ENCODE measurements at regions of chr12 and their contacts with region 1.

Region 1: DNA sequence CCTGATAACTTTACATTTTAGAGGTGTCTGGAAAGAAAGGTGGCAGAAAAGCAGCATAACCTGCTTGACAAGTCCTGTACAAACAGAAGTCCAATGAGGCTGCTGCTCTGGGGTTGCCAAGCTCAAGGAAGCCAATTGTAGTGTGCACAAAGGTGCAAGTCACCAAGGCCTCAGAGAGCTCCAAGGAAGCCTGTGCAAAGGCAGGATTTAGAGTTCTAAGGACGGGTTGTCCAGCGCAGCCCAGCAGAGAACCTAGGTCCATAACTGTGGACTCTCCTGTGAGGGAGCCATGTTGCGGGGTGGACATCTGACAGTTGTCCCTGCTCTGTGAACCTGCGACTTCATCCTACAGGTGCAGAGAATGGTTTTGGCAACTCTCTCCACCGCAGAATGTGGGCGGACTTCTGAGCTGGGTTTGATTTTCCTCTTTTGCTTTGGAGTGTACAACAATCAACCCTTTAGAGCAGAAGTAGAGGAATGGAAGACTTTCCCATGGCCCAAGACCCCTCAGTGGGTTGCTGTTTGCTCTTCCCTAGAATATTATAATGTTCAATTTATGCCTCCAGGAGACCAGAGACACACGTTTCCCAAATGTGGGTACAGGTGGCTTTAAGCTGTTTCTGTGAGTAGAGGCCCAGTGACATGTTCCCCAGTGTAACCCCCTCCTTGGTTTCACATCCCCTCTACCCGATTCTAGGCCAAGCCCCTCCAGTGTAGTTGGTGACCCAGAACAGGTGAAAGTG is 81.0 kb downstream of the ETV6 start:
- DNase-seq: peak; percentile 85
- ATAC-seq: peak; percentile 49
- H3K4me3 ChIP-seq: peak overlapping the region; percentile 18; the same call in 1 of the 2 replicates
- H3K27ac ChIP-seq: peak overlapping the region; percentile 89
- H3K4me1 ChIP-seq: peaks cover 93% of the 10 kb centered on the region
- H3K27me3 ChIP-seq: no peaks in the 10 kb centered on the region
- CTCF ChIP-seq: no peak
- EP300 ChIP-seq: peak in 1 of 2 experiments; percentile 52; a peak in 2 of 4 replicates
- POLR2A ChIP-seq: peak; percentile 62; the same call in 1 of the 2 replicates
- RAD21 ChIP-seq: peak; percentile 34

Region 2: GRCh38 chr12:11524446-11524845 is 206.0 kb before region 1 on chr12:
- CTCF ChIA-PET with region 1: no interaction called
- POLR2A ChIA-PET with region 1: no interaction called
- RAD21 ChIA-PET with region 1: no interaction called
- SMC1A ChIA-PET with region 1: no interaction called
- in situ Hi-C with region 1: no loop called
- intact Hi-C with region 1: no loop called
- DNase-seq: no peak
- ATAC-seq: no peak
- H3K4me3 ChIP-seq: no peak overlapping the region
- H3K27ac ChIP-seq: no peak overlapping the region
- H3K4me1 ChIP-seq: no peaks in the 10 kb centered on the region
- H3K27me3 ChIP-seq: no peaks in the 10 kb centered on the region; a peak in 1 of 4 replicates
- CTCF ChIP-seq: no peak
- EP300 ChIP-seq: no peak
- POLR2A ChIP-seq: no peak
- RAD21 ChIP-seq: no peak

Region 3: GRCh38 chr12:11568762-11569478 is 161.6 kb before region 1 on chr12:
- CTCF ChIA-PET with region 1: no interaction called
- POLR2A ChIA-PET with region 1: interaction called, 5 read pairs
- RAD21 ChIA-PET with region 1: interaction called, 44 read pairs
- SMC1A ChIA-PET with region 1: interaction called, 10 read pairs
- in situ Hi-C with region 1: no loop called
- intact Hi-C with region 1: loop called (anchors 2 kb)
- DNase-seq: peak; percentile 96
- ATAC-seq: peak; percentile 77
- H3K4me3 ChIP-seq: peak overlapping the region; percentile 48
- H3K27ac ChIP-seq: peak overlapping the region; percentile 98
- H3K4me1 ChIP-seq: peaks cover 46% of the 10 kb centered on the region
- H3K27me3 ChIP-seq: no peaks in the 10 kb centered on the region
- CTCF ChIP-seq: no peak
- EP300 ChIP-seq: peak; percentile 99
- POLR2A ChIP-seq: no peak
- RAD21 ChIP-seq: no peak

Region 4: DNA sequence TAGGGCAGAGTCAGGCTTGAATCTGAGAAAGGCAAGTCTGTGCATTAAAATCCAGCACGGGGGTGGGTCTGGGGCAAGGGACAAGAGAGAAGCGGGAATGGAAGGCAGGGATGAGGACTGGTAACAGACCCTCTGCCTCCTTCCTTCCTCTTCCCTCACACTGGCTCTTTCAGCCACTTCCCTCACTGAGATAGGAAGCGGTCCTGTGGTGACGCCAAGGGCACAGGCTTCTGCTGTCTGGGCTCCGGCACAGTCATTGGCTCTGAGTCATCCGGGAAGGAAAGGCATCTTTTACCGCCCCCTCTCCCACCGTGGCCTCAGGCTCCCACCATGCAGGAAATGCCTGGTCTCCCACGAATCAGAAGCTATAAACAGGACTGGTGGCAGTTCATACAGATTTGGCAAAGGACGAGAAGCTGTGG is 10.8 kb before region 1 on chr12:
- CTCF ChIA-PET with region 1: interaction called, 15 read pairs
- POLR2A ChIA-PET with region 1: interaction called, 28 read pairs
- RAD21 ChIA-PET with region 1: interaction called, 108 read pairs
- SMC1A ChIA-PET with region 1: interaction called, 115 read pairs
- in situ Hi-C with region 1: no loop called
- intact Hi-C with region 1: no loop called
- DNase-seq: no peak
- ATAC-seq: peak; percentile 12
- H3K4me3 ChIP-seq: no peak overlapping the region
- H3K27ac ChIP-seq: peak overlapping the region; percentile 83
- H3K4me1 ChIP-seq: peaks cover 78% of the 10 kb centered on the region
- H3K27me3 ChIP-seq: no peaks in the 10 kb centered on the region
- CTCF ChIP-seq: no peak
- EP300 ChIP-seq: no peak
- POLR2A ChIP-seq: peak; percentile 53; the same call in 1 of the 2 replicates
- RAD21 ChIP-seq: no peak

Region 5: DNA sequence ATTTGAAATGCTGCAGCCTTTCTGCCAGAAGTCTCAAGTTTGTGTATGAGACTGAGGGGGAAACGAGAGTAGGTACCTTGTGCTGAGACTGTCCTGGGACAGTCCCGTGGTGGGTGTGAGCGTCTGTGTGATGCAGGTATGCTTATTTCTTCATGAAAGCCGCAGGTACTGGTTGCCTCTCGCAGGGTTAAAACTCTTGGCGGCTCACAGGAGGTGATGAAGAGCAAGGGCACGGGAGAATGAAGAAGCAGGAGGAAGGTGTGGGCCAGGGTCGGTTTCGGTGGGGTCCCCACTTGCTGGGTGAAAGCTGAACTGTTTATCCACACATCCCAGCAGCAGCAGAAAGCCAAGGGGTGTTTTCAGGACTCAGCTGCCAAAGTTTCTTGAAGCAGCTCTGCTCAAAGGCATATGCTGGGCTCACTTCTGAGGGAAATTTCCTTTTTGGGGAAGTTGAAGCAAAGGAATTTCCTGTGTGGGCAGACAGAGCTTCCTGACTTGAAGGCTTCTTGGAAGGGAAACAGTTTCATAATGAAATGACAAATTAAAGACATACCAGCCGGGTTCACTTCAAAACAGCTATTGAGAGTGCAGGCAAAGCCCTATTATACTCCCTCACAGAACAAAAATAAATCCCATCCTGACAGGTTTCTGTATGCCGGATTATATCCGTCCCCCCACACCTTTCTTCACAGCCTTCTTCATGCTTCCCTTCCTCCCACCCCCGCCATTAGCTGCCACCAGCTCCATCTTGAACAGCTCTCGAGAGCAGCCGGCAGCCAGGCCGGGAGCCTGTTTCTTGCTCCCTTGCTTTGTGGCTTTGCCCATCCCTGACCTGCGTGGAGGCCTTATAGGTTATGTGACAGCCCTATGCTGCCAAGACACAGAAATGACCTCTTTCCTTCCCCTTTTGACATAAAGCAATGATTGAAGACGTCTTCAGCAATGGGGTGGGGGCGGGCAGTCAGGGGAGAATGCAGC is 35.6 kb after region 1 on chr12:
- CTCF ChIA-PET with region 1: interaction called, 41 read pairs
- POLR2A ChIA-PET with region 1: interaction called, 39 read pairs
- RAD21 ChIA-PET with region 1: interaction called, 497 read pairs
- SMC1A ChIA-PET with region 1: interaction called, 270 read pairs
- in situ Hi-C with region 1: no loop called
- intact Hi-C with region 1: loop called (anchors 1 kb)
- DNase-seq: peak; percentile 92
- ATAC-seq: peak; percentile 75
- H3K4me3 ChIP-seq: peak overlapping the region; percentile 11; the same call in 1 of the 2 replicates
- H3K27ac ChIP-seq: peak overlapping the region; percentile 100
- H3K4me1 ChIP-seq: peaks cover 92% of the 10 kb centered on the region
- H3K27me3 ChIP-seq: no peaks in the 10 kb centered on the region
- CTCF ChIP-seq: no peak
- EP300 ChIP-seq: peak; percentile 81 to 89
- POLR2A ChIP-seq: 0 out of 2 replicates have a peak, but pooled peaks have one; percentile 32
- RAD21 ChIP-seq: peak; percentile 19; the same call in 1 of the 2 replicates

Region 6: DNA sequence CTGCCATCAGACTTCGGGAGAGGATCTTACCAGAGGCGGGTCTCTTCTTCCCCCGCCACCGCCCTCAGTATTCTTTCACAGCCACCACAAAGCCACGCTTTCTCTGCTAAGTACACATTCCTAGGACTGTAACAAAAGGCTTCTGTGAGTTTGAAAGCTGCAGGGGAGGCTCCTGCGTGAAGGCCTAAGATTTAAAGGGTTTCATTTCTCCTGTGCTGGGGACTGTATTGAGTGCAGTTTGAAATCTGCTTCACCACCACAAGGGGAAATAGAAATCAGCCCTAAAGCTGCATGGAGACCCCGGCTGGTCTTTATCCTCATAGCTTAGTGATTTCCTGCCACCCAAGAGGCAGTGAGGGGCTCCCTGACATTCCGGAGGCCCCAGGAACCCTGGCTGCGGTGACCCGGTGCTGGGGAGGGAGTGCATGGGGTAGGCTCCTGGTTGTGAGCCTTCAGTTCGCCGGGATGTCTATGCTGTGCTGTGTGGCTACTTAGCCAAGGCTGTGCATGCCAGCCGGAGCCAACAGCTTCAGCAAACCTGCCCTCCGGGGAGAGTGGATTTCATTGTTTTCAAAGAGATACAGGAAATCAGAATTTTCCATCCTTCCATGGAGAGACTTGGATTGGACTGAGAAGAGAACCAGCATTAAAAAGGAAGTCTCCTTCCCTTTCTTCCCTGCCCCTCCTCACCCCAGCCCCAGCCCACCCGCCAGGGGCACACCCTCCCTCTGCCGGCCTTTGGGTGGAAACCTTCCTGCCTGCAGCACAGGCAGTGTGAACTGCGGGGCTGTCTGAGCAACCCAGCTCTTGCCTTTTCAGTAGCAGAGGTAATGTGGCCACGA is 82.3 kb after region 1 on chr12:
- CTCF ChIA-PET with region 1: interaction called, 3 read pairs
- POLR2A ChIA-PET with region 1: interaction called, 7 read pairs
- RAD21 ChIA-PET with region 1: interaction called, 8 read pairs
- SMC1A ChIA-PET with region 1: interaction called, 22 read pairs
- in situ Hi-C with region 1: no loop called
- intact Hi-C with region 1: loop called (anchors 2 kb)
- DNase-seq: no peak
- ATAC-seq: peak; percentile 89
- H3K4me3 ChIP-seq: peak overlapping the region; percentile 61
- H3K27ac ChIP-seq: peak overlapping the region; percentile 93
- H3K4me1 ChIP-seq: peaks cover 41% of the 10 kb centered on the region
- H3K27me3 ChIP-seq: no peaks in the 10 kb centered on the region
- CTCF ChIP-seq: peak; percentile 19 to 38 (median 20); a peak in 4 of 6 replicates
- EP300 ChIP-seq: no peak
- POLR2A ChIP-seq: peak; percentile 40; the same call in 1 of the 2 replicates
- RAD21 ChIP-seq: peak; percentile 34; the same call in 1 of the 2 replicates

Region 7: DNA sequence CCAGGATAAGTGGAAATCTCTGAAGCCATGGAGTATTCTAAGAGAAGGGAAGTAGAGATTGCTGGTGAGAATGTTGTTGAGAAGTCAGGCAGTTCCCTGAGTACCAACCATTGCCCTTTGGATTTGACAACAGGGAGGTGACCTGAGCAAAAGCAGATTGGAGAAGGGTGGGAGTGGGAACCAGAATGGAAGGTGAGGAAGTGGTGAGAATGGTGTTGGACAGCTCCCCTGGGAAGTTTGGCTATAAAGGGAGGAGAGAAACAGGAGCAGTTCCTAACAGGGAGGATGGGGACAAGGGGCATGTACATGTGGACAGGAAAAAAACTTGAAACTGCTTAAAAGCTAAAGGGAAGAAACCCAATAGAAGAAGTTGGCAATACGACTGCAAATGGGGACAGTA is 117.1 kb after region 1 on chr12:
- CTCF ChIA-PET with region 1: no interaction called
- POLR2A ChIA-PET with region 1: no interaction called
- RAD21 ChIA-PET with region 1: no interaction called
- SMC1A ChIA-PET with region 1: no interaction called
- in situ Hi-C with region 1: no loop called
- intact Hi-C with region 1: no loop called
- DNase-seq: no peak
- ATAC-seq: no peak
- H3K4me3 ChIP-seq: no peak overlapping the region
- H3K27ac ChIP-seq: no peak overlapping the region
- H3K4me1 ChIP-seq: no peaks in the 10 kb centered on the region
- H3K27me3 ChIP-seq: no peaks in the 10 kb centered on the region
- CTCF ChIP-seq: no peak
- EP300 ChIP-seq: no peak
- POLR2A ChIP-seq: no peak
- RAD21 ChIP-seq: no peak

Region 8: DNA sequence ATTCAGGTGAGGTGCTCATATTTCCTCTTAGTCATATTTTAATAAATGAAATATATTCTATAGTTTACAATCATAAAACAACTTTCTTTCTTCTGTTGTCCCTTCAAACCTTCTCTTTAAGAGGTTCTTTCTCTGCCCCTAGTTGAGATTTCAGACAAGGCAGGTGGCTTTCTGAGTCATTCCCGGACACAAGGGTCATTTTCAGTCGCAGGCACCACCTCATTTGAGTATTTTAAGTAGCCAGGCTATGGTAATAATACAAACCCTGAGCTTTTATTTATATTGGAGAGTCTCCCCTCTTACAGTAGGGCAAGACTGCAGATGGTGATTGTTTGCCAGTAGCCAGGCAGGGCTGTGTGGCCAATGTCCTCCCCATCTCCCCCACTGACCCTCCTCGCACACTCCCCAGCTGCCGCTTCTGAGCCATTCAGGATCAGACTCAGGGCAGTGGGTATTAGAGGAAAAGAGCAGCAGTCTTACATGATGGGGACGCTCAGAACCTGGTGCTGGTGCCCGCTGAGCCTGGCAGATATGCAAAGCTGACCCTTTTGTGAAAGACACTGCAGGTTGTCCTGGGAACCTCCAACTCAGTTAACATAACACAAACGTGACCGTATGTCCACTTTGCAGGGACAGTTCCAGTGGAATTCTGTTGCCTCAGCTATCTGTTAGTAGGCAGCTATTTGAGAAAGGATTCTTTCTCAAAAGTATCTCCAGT is 239.1 kb after region 1 on chr12:
- CTCF ChIA-PET with region 1: no interaction called
- POLR2A ChIA-PET with region 1: no interaction called
- RAD21 ChIA-PET with region 1: no interaction called
- SMC1A ChIA-PET with region 1: no interaction called
- in situ Hi-C with region 1: no loop called
- intact Hi-C with region 1: no loop called
- DNase-seq: peak; percentile 47
- ATAC-seq: peak; percentile 92
- H3K4me3 ChIP-seq: no peak overlapping the region
- H3K27ac ChIP-seq: peak overlapping the region; percentile 48
- H3K4me1 ChIP-seq: peaks cover 17% of the 10 kb centered on the region
- H3K27me3 ChIP-seq: no peaks in the 10 kb centered on the region
- CTCF ChIP-seq: no peak
- EP300 ChIP-seq: peak; percentile 13 to 27; a peak in 1 of 4 replicates
- POLR2A ChIP-seq: no peak
- RAD21 ChIP-seq: peak; percentile 25; the same call in 1 of the 2 replicates

Region 9: DNA sequence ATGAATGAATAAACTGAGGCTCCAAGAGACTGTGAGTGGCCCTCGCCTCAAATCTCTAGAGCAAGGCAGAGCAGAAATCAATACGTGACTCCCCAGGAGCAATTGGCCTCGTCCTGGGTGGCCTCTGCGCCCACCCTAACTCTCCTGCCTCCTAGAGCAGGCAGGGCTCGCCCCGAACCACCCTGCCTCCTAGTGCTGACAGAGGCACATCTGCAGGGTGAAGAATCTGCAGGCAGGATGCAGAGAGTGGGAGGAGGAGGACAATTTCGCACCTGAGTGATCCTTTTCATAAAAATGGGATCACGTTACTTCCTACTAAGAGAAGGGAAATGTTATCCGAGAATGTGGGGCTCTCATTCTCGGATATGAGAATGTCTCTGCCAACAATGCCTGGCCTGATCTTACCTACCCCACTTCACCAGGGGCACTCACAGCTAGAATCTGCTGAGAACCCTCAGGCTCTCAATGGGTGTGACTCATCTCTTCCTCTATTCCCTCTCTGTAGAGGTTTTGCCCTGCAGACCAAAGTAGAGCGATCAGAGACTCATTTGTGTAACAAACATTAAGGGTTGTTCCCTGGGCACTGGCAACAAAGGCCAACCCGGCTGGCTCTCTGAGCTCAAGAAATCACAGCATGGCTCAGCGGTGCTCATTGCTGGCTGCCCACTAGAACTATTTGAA is 278.6 kb after region 1 on chr12:
- CTCF ChIA-PET with region 1: interaction called, 5 read pairs
- POLR2A ChIA-PET with region 1: no interaction called
- RAD21 ChIA-PET with region 1: interaction called, 19 read pairs
- SMC1A ChIA-PET with region 1: interaction called, 9 read pairs
- in situ Hi-C with region 1: no loop called
- intact Hi-C with region 1: loop called (anchors 2 kb)
- DNase-seq: peak; percentile 86
- ATAC-seq: peak; percentile 63
- H3K4me3 ChIP-seq: no peak overlapping the region
- H3K27ac ChIP-seq: peak overlapping the region; percentile 90
- H3K4me1 ChIP-seq: peaks cover 57% of the 10 kb centered on the region
- H3K27me3 ChIP-seq: no peaks in the 10 kb centered on the region
- CTCF ChIP-seq: peak; percentile 33 to 45 (median 41); a peak in 5 of 6 replicates
- EP300 ChIP-seq: no peak; a peak in 1 of 4 replicates
- POLR2A ChIP-seq: no peak
- RAD21 ChIP-seq: peak; percentile 71

Region 10: GRCh38 chr12:12486661-12487240 is 756.3 kb after region 1 on chr12:
- CTCF ChIA-PET with region 1: no interaction called
- POLR2A ChIA-PET with region 1: no interaction called
- RAD21 ChIA-PET with region 1: no interaction called
- SMC1A ChIA-PET with region 1: no interaction called
- in situ Hi-C with region 1: no loop called
- intact Hi-C with region 1: no loop called
- DNase-seq: peak; percentile 57
- ATAC-seq: peak; percentile 93
- H3K4me3 ChIP-seq: no peak overlapping the region
- H3K27ac ChIP-seq: peak overlapping the region; percentile 58
- H3K4me1 ChIP-seq: peaks cover 19% of the 10 kb centered on the region
- H3K27me3 ChIP-seq: no peaks in the 10 kb centered on the region
- CTCF ChIP-seq: no peak
- EP300 ChIP-seq: peak; percentile 96 to 98
- POLR2A ChIP-seq: no peak
- RAD21 ChIP-seq: no peak

Measured in GM12878 (cell line).